AG04449 (cell line): ENCODE measurements at regions of chr17 and their contacts with region 1.

Region 1: GRCh38 chr17:50686494-50687199 is 21.1 kb downstream of the ANKRD40 start:
- DNase-seq: no peak
- H3K4me3 ChIP-seq: no peak overlapping the region
- CTCF ChIP-seq: no peak

Region 2: DNA sequence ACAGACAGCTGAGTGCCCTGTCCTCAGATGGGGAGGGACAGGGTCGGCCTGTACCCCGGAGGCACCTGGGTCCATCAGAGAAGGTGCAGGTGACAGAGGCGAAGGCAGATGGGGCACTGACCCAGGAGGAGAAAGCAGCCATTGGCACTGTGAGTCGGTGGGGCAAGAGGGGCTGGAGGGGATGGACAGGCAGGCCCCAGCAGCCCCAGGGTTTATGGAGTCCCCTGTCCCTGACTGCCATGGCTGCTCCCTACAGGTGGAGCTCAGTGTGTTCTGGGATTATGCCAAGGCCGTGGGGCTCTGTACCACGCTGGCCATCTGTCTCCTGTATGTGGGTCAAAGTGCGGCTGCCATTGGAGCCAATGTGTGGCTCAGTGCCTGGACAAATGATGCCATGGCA is 11.0 kb before region 1 on chr17:
- CTCF ChIA-PET with region 1: interaction called, 23 read pairs
- POLR2A ChIA-PET with region 1: interaction called, 5 read pairs
- DNase-seq: no peak
- H3K4me3 ChIP-seq: no peak overlapping the region
- CTCF ChIP-seq: no peak

Region 3: DNA sequence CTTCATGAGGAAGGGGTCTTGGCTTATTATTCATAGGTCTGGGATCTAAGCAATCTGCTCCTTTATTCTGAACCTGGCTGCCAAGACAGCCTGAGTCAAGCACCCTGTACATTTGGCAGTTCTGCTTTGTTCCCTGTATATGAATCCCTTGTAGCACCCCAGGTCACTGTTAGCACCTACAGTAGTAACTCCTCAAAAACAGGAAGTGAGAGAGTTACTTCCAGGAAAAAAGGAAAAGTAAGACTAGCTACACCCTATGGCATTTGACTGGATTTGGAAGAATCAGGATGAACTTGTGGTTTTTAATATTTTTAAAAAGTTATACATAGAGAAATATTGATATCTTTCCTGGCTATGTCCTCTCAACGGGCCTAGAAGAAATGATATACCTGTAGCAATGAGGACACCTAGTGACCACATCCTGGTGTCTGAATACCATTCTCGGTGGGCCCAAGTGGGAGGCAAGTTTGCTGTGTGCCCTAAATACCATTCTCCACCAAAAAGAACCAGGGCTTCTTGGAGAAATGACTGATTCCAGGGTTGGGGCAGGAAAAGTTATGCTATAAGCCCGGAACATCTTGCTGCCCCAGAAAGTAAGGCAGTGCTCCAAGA is 11.1 kb after region 1 on chr17:
- CTCF ChIA-PET with region 1: interaction called, 54 read pairs
- POLR2A ChIA-PET with region 1: no interaction called
- DNase-seq: no peak
- H3K4me3 ChIP-seq: no peak overlapping the region
- CTCF ChIP-seq: no peak